Spleen (tissue), 13 donors: ENCODE measurements at regions of chr6 and their contacts with region 1.

Region 1: DNA sequence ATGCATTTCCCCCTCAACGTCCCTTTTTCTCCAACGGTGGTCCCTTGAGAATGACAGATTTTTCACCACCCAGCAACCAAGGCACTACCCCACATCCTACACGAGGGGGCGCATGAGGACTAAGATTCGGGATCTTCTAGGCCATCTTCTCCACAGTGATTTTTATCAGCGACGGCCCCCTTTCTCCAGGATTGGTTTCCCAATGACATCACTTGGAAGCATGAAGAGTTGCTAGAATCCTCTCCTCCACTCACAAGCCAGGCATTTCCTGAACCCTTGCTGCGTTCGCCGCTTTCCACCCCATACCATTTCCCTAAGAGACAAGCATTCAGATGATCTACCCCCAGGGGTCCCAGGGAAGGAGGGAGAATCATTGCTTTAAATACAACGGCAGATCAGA is 252.0 kb downstream of the HIVEP2 start:
- DNase-seq: peak; percentile 82
- H3K4me3 ChIP-seq: no peak overlapping the region
- H3K27ac ChIP-seq: no peak overlapping the region
- H3K4me1 ChIP-seq: peaks cover 6 to 28% (median 9%) of the 10 kb centered on the region in 6 donors
- H3K27me3 ChIP-seq: no peaks in the 10 kb centered on the region
- CTCF ChIP-seq: peak; percentile 72 to 97 (median 92)
- POLR2A ChIP-seq: no peak

Region 2: DNA sequence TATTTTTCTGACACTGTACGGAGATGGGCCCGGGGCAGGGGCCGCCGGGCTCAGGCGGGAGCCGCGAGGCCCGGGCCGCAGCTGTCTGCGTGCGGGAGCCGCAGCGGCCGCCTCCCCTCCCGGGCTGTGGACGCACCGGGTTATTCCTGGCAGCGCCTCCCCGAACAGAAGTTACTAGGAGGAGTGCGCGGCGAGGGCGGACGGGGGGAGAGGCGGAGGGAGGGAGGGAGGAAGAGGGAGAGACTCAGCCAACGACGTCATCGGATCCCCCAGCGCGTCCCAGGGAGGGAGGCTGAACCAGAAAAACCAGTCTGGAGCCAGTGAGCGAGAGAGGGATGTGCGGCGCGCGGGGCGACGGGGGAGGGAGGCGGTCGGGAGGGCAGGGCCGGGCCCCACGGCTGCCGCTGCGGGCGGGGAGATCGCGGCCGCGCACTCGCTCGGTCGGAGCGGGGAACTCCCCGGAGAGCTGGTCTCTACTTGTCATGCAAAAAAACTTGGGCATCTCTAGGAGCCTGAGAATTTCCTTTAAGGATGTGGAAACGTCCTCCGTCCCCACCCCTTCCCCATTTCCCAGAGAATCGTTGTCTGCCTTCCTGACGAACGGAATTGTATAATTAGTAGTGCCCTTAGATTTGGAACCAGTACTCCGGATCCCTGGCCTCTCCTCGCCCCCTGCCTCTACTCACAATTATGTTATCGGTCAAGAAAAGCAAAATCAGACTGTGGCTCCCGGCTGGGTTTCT is 253.4 kb after region 1 on chr6:
- intact Hi-C with region 1: loop called (anchors 5 kb)
- DNase-seq: peak; percentile 95
- H3K4me3 ChIP-seq: peak overlapping the region; percentile 75 to 92 (median 82)
- H3K27ac ChIP-seq: peak overlapping the region; percentile 95 to 99 (median 99)
- H3K4me1 ChIP-seq: peaks cover 26 to 41% (median 35%) of the 10 kb centered on the region in 6 donors
- H3K27me3 ChIP-seq: no peaks in the 10 kb centered on the region
- CTCF ChIP-seq: no peak
- POLR2A ChIP-seq: peak in 2 of 3 donors; percentile 50 to 80

Region 3: GRCh38 chr6:143026696-143027449 is 333.9 kb after region 1 on chr6:
- intact Hi-C with region 1: loop called (anchors 5 kb)
- DNase-seq: peak; percentile 64
- H3K4me3 ChIP-seq: no peak overlapping the region
- H3K27ac ChIP-seq: no peak overlapping the region
- H3K4me1 ChIP-seq: no peaks in the 10 kb centered on the region
- H3K27me3 ChIP-seq: no peaks in the 10 kb centered on the region
- CTCF ChIP-seq: peak; percentile 28 to 69 (median 64)
- POLR2A ChIP-seq: no peak

Region 4: GRCh38 chr6:143427109-143427817 is 734.3 kb after region 1 on chr6:
- intact Hi-C with region 1: loop called (anchors 5 kb)
- DNase-seq: peak; percentile 92
- H3K4me3 ChIP-seq: no peak overlapping the region
- H3K27ac ChIP-seq: no peak overlapping the region
- H3K4me1 ChIP-seq: peaks cover 0 to 6% (median 0%) of the 10 kb centered on the region in 6 donors
- H3K27me3 ChIP-seq: no peaks in the 10 kb centered on the region
- CTCF ChIP-seq: peak; percentile 75 to 96 (median 91)
- POLR2A ChIP-seq: no peak

Region 5: GRCh38 chr6:143652841-143653331 is 959.9 kb after region 1 on chr6:
- intact Hi-C with region 1: no loop called
- DNase-seq: no peak
- H3K4me3 ChIP-seq: no peak overlapping the region
- H3K27ac ChIP-seq: no peak overlapping the region
- H3K4me1 ChIP-seq: no peaks in the 10 kb centered on the region
- H3K27me3 ChIP-seq: no peaks in the 10 kb centered on the region
- CTCF ChIP-seq: no peak
- POLR2A ChIP-seq: no peak